Activated naive CD4-positive, alpha-beta T cell treated with anti-CD3 and anti-CD28 coated beads for 36 hours (primary cell): ENCODE measurements at regions of chr20 and their contacts with region 1.

Region 1: GRCh38 chr20:32902456-32903420 is 44.0 kb downstream of the EFCAB8 start:
- DNase-seq: peak; percentile 85
- H3K4me3 Mint-ChIP-seq: no peak overlapping the region
- H3K27ac Mint-ChIP-seq: peak overlapping the region; percentile 24
- H3K4me1 Mint-ChIP-seq: peaks cover 29% of the 10 kb centered on the region
- H3K27me3 Mint-ChIP-seq: no peaks in the 10 kb centered on the region

Region 2: DNA sequence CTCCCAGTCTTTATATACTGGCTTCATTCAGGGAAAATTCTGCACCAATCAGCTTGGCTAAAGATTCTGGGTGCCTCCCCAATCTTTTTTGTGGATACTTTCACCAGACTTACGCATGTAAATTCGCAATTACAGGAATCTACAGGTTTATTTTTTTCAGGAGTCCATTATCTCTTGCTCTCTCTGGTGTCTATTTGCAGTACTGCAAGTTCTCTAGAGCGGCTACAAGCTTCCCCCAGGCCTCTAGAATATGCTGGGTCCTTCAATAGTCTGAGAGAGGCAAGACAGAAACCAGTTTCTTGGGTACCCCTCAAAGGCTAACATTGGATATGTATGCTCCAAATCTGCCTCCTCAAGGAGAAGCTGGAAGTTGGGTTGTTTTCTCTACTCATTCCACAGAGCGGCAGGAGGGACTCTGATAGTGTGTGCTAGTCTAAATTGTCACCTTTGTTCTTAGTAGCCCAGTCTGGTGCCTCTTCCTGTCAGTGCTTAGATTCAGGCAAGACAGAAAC is 43.0 kb after region 1 on chr20:
- CTCF ChIA-PET with region 1: interaction called, 32 read pairs
- intact Hi-C with region 1: loop called (anchors 1 kb)
- DNase-seq: peak; percentile 58
- H3K4me3 Mint-ChIP-seq: peak overlapping the region; percentile 23
- H3K27ac Mint-ChIP-seq: peak overlapping the region; percentile 92
- H3K4me1 Mint-ChIP-seq: peaks cover 37% of the 10 kb centered on the region
- H3K27me3 Mint-ChIP-seq: no peaks in the 10 kb centered on the region

Region 3: DNA sequence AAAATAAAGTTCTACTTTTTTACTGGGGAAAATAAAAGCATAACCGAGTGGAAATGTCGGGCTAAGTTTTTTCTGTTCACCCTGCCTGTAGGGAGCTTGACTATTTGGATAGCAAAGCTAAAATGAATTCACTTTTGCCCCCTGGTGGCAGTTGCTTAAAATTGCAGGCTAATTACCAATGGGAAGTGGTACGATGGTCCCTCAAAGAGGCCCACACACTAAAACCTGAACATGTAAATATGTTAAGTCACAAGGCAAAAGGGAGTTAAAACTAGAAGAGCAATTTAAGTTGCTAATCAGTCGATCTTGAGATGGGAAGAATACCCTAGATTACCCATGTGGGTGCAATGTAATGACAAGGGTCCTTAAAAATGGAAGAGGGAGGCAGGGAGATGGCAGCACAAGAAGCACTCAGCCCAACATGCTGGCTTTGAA is 102.4 kb after region 1 on chr20:
- CTCF ChIA-PET with region 1: interaction called, 65 read pairs
- intact Hi-C with region 1: loop called (anchors 1 kb)
- DNase-seq: peak; percentile 60
- H3K4me3 Mint-ChIP-seq: no peak overlapping the region
- H3K27ac Mint-ChIP-seq: no peak overlapping the region
- H3K4me1 Mint-ChIP-seq: peaks cover 24% of the 10 kb centered on the region
- H3K27me3 Mint-ChIP-seq: no peaks in the 10 kb centered on the region

Region 4: DNA sequence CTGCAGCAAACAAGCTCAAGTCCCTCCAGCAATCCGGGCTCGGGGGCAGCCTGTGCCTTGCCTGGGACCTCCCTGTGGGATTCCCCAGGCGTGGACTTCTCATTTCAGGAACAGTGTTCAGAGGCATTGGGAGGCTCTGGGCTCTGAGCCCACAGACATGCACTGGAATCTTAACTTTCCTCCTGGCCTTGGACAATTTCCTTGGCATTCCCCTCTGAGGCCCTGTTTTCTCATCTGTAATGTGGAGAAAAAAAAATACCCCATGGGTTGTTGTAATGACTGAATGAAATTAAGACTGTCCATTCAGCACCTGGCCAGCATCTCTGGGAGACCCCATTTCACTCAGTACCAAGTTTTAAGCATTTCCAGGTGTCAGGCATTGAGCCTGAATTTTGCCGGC is 194.3 kb after region 1 on chr20:
- CTCF ChIA-PET with region 1: interaction called, 21 read pairs
- intact Hi-C with region 1: loop called (anchors 1 kb)
- DNase-seq: no peak
- H3K4me3 Mint-ChIP-seq: no peak overlapping the region
- H3K27ac Mint-ChIP-seq: no peak overlapping the region
- H3K4me1 Mint-ChIP-seq: peaks cover 2% of the 10 kb centered on the region
- H3K27me3 Mint-ChIP-seq: no peaks in the 10 kb centered on the region

Region 5: GRCh38 chr20:33291830-33292355 is 389.2 kb after region 1 on chr20:
- CTCF ChIA-PET with region 1: interaction called, 8 read pairs
- intact Hi-C with region 1: loop called (anchors 1 kb)
- DNase-seq: peak; percentile 75
- H3K4me3 Mint-ChIP-seq: no peak overlapping the region
- H3K27ac Mint-ChIP-seq: no peak overlapping the region
- H3K4me1 Mint-ChIP-seq: no peaks in the 10 kb centered on the region
- H3K27me3 Mint-ChIP-seq: no peaks in the 10 kb centered on the region